Dorsolateral prefrontal cortex (tissue), 120 donors: ENCODE measurements at regions of chr14 and their contacts with region 1.

Region 1: GRCh38 chr14:21476925-21477681 is at the starts of genes RAB2B and TOX4:
- DNase-seq: peak; percentile 91 to 99 (median 98)
- H3K4me3 ChIP-seq: peak within 1 kb of the TSS; percentile 62 to 99 (median 91)
- H3K27ac ChIP-seq: peak within 1 kb of the TSS; percentile 5 to 92 (median 84)
- H3K27me3 ChIP-seq: no peaks in the 10 kb centered on the region
- CTCF ChIP-seq: peak; percentile 74 to 98 (median 94)
- total RNA-seq, gene RAB2B: 27.7 to 58.6 (median 42.6) TPM
- total RNA-seq, gene TOX4: 64.5 to 139 (median 90.9) TPM

Region 2: GRCh38 chr14:21437063-21437901 is 39.8 kb before region 1 on chr14:
- intact Hi-C with region 1: loop called (anchors 2 to 5 kb)
- DNase-seq: peak; percentile 96 to 100 (median 99)
- H3K4me3 ChIP-seq: peak overlapping the region; percentile 51 to 98 (median 87)
- H3K27ac ChIP-seq: peak overlapping the region; percentile 19 to 96 (median 90)
- H3K27me3 ChIP-seq: no peaks in the 10 kb centered on the region
- CTCF ChIP-seq: peak in 19 of 56 donors; percentile 7 to 46 (median 25)

Region 3: DNA sequence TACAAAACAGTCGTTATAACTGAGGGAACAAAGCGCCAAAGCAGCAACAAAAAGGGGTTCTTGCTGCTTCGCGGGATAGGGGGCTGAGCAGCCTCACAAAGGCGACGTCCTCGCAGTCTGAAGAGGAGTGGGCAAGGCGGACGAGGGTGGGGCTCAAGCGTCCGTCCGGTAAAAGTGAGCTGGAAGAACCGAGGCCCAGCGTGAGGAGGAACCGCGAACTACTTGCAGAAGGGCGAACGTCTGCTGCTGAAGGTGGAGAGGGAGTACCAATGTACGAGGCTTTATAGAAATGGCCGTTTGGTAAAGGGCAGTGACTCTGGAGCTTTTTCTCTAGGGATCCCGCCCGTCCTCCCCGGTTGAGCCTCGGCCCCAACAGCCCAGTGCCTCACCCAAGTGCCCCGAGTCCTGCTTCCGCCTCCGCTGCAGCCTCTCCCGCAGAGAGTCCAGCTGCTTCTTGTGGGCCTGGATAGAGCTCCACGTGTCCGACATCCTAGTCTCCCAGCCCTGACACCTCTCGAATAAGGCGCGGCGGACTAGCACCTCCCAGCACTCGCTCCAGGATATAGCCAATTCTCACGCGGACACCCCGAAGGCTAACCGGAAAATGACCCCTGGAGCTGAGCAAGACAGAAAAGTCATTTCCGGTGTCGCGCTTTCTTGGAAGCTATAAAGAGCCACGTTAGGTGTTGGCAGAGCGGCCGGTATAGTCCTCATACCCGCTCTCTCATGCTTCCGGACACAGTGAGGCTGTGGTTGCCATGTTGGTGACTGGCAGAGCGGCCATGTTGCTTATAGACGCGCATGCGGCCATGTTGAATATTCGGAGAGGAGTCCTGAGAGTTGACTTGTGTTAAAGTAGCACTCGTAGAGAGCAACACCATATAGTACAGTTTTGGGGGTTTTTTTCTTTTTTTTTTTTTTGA is 33.9 kb after region 1 on chr14 and contains the start of gene METTL3:
- intact Hi-C with region 1: loop called (anchors 1 to 5 kb)
- DNase-seq: peak; percentile 90 to 99 (median 98)
- H3K4me3 ChIP-seq: peak within 1 kb of the TSS; percentile 65 to 100 (median 90)
- H3K27ac ChIP-seq: peak within 1 kb of the TSS in 52 of 59 donors; percentile 21 to 91 (median 74)
- H3K27me3 ChIP-seq: no peaks in the 10 kb centered on the region
- CTCF ChIP-seq: peak in 36 of 56 donors; percentile 4 to 54 (median 28)
- total RNA-seq, gene METTL3: 30.0 to 59.4 (median 43.7) TPM

Region 4: DNA sequence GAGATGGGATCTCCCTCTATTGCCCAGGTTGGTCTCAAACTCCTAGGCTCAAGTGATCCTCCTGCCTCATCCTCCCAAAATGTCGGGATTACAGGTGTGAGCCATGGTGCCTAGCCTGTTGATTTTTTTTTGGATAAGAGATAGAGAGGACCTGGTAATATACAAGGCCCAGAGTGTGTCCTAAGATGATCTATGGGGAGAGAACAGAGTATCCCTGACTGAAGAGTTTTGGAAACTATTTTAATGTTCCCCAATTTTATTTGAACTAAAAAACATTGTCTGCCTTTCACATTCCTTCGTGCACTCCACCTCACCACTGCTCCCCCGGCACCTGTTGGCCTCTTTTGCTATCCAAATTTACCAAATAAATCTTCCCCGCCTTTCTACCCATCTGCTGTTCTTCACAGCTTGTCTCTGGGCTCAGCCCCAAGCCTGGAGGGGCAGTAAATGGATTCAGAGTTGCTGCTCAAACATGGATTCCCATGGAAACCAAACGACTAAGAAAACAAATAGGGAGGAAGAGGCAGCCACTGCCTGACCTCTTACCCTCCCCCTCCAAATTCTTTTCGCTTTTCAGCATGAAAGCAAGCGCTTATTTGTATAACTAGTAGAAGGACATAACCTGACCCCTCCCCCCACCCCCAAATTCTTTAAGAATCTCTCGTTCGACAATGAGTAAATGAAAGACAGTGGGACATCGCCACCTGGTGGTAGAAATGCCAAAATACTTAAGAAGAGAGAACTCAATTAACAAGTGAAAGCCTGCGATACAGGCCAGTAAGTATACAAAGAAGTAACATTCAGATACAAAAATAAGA is 80.2 kb after region 1 on chr14:
- intact Hi-C with region 1: no loop called
- DNase-seq: peak in 7 of 10 donors; percentile 49 to 89 (median 57)
- H3K4me3 ChIP-seq: peak overlapping the region; percentile 20 to 65 (median 48)
- H3K27ac ChIP-seq: peak overlapping the region in 48 of 59 donors; percentile 11 to 85 (median 62)
- H3K27me3 ChIP-seq: no peaks in the 10 kb centered on the region
- CTCF ChIP-seq: peak; percentile 69 to 96 (median 84)

Region 5: DNA sequence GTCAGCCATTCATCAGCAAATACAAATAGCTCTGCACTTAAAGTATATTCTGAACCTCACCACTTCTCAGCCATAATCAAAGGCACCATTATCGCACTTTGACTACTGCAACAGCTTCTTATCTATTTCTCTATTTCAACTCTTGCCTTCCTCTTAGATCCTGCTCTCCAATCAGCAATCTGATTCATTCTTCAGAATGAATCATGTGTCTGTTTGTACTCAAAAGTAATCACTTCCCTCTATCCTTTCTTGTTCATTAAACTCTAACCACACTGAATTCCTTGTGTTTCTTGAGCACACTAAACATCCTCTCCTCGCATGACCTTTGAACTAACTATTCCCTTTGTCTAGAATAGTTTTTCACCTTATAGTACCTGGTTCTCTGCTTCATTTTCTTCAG is 209.4 kb after region 1 on chr14:
- intact Hi-C with region 1: no loop called
- DNase-seq: no peak
- H3K4me3 ChIP-seq: no peak overlapping the region
- H3K27ac ChIP-seq: no peak overlapping the region
- H3K27me3 ChIP-seq: peaks cover 0 to 9% (median 0%) of the 10 kb centered on the region in 45 donors
- CTCF ChIP-seq: no peak